ENCODE measurements at regions of chr7 and their contacts with region 1.

Region 1: GRCh38 chr7:38398725-38399321 is 125.4 kb upstream of the TARP start:
- DNase-seq: peak; percentile 33
- ATAC-seq: peak; percentile 80
- H3K4me3 ChIP-seq: no peak overlapping the region
- H3K27ac ChIP-seq: no peak overlapping the region
- H3K4me1 ChIP-seq: no peaks in the 10 kb centered on the region
- H3K27me3 ChIP-seq: 0 out of 2 replicates have a peak, but pooled peaks cover 8% of the 10 kb centered on the region
- CTCF ChIP-seq: peak; percentile 65 to 82 (median 69); a peak in 5 of 6 replicates
- POLR2A ChIP-seq: no peak
- RAD21 ChIP-seq: peak; percentile 65

Region 2: DNA sequence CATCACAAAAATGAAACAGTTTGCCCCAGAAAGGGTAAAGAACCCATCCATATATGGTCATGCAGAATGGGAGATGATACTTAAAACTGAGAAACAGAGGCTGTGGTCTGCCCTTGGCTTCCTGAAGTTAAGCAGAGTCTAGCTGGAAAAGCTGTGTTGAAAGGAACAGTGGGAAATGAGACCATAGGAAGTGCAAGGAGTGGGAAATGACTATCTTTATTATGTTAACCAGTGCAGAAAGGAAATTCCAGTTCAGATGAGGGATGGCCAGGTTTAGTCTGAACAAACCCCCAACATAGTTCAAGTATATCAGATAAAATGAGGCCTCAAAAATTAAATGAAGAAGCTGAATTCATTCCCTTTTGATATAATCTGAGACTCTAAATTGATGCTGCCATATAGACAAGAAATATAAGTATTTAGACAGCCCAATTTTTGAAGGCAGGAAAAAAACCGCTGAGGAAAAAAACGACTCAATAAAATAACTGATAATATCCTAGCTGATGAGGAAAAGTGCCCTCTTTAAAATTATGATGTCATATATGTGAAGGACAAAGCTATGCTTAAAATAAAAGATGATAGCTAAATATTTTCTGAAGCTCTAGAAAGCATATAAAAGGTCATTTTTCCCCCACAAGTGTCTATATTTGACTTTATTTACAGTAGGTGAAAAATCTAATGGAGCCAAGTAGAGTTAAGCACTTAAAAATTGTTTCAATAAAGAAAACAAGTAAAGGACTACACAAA is 13.0 kb before region 1 on chr7:
- CTCF ChIA-PET with region 1: interaction called, 10 read pairs
- POLR2A ChIA-PET with region 1: no interaction called
- RAD21 ChIA-PET with region 1: no interaction called
- intact Hi-C with region 1: no loop called
- DNase-seq: no peak
- ATAC-seq: no peak
- H3K4me3 ChIP-seq: no peak overlapping the region
- H3K27ac ChIP-seq: no peak overlapping the region
- H3K4me1 ChIP-seq: no peaks in the 10 kb centered on the region; a peak in 1 of 4 replicates
- H3K27me3 ChIP-seq: peaks cover 14% of the 10 kb centered on the region; the same call in 1 of the 2 replicates
- CTCF ChIP-seq: no peak
- POLR2A ChIP-seq: no peak
- RAD21 ChIP-seq: no peak

Region 3: GRCh38 chr7:38660427-38661099 is 261.7 kb after region 1 on chr7:
- CTCF ChIA-PET with region 1: interaction called, 7 read pairs
- POLR2A ChIA-PET with region 1: no interaction called
- RAD21 ChIA-PET with region 1: no interaction called
- intact Hi-C with region 1: loop called (anchors 2 kb)
- DNase-seq: peak; percentile 27
- ATAC-seq: peak; percentile 94
- H3K4me3 ChIP-seq: no peak overlapping the region
- H3K27ac ChIP-seq: no peak overlapping the region
- H3K4me1 ChIP-seq: no peaks in the 10 kb centered on the region
- H3K27me3 ChIP-seq: peaks cover 32% of the 10 kb centered on the region
- CTCF ChIP-seq: peak; percentile 67 to 78 (median 78)
- POLR2A ChIP-seq: no peak
- RAD21 ChIP-seq: peak; percentile 74

Region 4: DNA sequence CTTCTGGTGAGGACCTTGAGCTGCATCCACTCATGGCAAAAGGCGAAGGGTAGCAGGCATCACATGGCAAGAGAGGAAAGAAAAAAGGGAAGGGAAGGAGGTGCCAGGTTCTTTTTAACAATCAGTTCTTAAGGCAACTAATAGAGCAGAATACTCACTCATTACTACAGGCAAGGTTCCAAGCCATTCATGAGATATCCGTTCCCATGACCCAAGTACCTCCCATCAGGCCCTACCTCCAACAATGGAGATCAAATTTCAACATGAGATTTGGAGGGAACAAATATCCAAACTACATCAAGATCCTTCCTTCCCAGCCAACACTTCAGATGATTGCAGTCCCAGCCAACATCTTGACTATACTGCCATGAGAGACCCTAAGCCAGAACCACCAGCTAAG is 1128.5 kb after region 1 on chr7:
- CTCF ChIA-PET with region 1: no interaction called
- POLR2A ChIA-PET with region 1: no interaction called
- RAD21 ChIA-PET with region 1: no interaction called
- intact Hi-C with region 1: loop called (anchors 5 kb)
- DNase-seq: no peak
- ATAC-seq: no peak
- H3K4me3 ChIP-seq: no peak overlapping the region
- H3K27ac ChIP-seq: no peak overlapping the region
- H3K4me1 ChIP-seq: no peaks in the 10 kb centered on the region
- H3K27me3 ChIP-seq: no peaks in the 10 kb centered on the region
- CTCF ChIP-seq: no peak
- POLR2A ChIP-seq: no peak
- RAD21 ChIP-seq: no peak